CD8-positive, alpha-beta T cell (primary cell): ENCODE measurements at regions of chr12 and their contacts with region 1.

Region 1: GRCh38 chr12:31959161-31959700 is at the start of gene RESF1:
- DNase-seq: peak; percentile 70 to 95 (median 87)
- ATAC-seq: peak; percentile 73
- H3K4me3 ChIP-seq: peak within 1 kb of the TSS; percentile 75 to 76
- H3K4me3 Mint-ChIP-seq: peak within 1 kb of the TSS; percentile 96
- H3K27ac ChIP-seq: peak within 1 kb of the TSS; percentile 75 to 80
- H3K27ac Mint-ChIP-seq: peak within 1 kb of the TSS; percentile 97
- H3K4me1 ChIP-seq: peaks cover 47% of the 10 kb centered on the region
- H3K4me1 Mint-ChIP-seq: peaks cover 64% of the 10 kb centered on the region
- H3K27me3 ChIP-seq: no peaks in the 10 kb centered on the region
- H3K27me3 Mint-ChIP-seq: no peaks in the 10 kb centered on the region
- CTCF ChIP-seq: no peak
- total RNA-seq, gene RESF1: 117 to 119 TPM

Region 2: GRCh38 chr12:31650927-31651326 is 308.3 kb before region 1 on chr12:
- CTCF ChIA-PET with region 1: interaction called, 16 read pairs
- POLR2A ChIA-PET with region 1: interaction called, 15 read pairs
- intact Hi-C with region 1: loop called in 1 of 2 experiments (anchors 1 kb)
- DNase-seq: no peak
- ATAC-seq: no peak
- H3K4me3 ChIP-seq: no peak overlapping the region
- H3K4me3 Mint-ChIP-seq: no peak overlapping the region
- H3K27ac ChIP-seq: no peak overlapping the region
- H3K27ac Mint-ChIP-seq: no peak overlapping the region
- H3K4me1 ChIP-seq: peaks cover 6% of the 10 kb centered on the region
- H3K4me1 Mint-ChIP-seq: peaks cover 12% of the 10 kb centered on the region
- H3K27me3 ChIP-seq: no peaks in the 10 kb centered on the region
- H3K27me3 Mint-ChIP-seq: no peaks in the 10 kb centered on the region
- CTCF ChIP-seq: no peak

Region 3: GRCh38 chr12:31682136-31682962 is 276.9 kb before region 1 on chr12:
- CTCF ChIA-PET with region 1: interaction called, 4 read pairs
- POLR2A ChIA-PET with region 1: interaction called, 7 read pairs
- intact Hi-C with region 1: loop called in 1 of 2 experiments (anchors 1 kb)
- DNase-seq: peak; percentile 46 to 89 (median 66)
- ATAC-seq: peak; percentile 98
- H3K4me3 ChIP-seq: no peak overlapping the region
- H3K4me3 Mint-ChIP-seq: peak overlapping the region; percentile 13
- H3K27ac ChIP-seq: peak overlapping the region in 1 of 2 experiments; percentile 31
- H3K27ac Mint-ChIP-seq: peak overlapping the region; percentile 75
- H3K4me1 ChIP-seq: no peaks in the 10 kb centered on the region
- H3K4me1 Mint-ChIP-seq: peaks cover 9% of the 10 kb centered on the region
- H3K27me3 ChIP-seq: no peaks in the 10 kb centered on the region
- H3K27me3 Mint-ChIP-seq: no peaks in the 10 kb centered on the region
- CTCF ChIP-seq: peak; percentile 82

Region 4: DNA sequence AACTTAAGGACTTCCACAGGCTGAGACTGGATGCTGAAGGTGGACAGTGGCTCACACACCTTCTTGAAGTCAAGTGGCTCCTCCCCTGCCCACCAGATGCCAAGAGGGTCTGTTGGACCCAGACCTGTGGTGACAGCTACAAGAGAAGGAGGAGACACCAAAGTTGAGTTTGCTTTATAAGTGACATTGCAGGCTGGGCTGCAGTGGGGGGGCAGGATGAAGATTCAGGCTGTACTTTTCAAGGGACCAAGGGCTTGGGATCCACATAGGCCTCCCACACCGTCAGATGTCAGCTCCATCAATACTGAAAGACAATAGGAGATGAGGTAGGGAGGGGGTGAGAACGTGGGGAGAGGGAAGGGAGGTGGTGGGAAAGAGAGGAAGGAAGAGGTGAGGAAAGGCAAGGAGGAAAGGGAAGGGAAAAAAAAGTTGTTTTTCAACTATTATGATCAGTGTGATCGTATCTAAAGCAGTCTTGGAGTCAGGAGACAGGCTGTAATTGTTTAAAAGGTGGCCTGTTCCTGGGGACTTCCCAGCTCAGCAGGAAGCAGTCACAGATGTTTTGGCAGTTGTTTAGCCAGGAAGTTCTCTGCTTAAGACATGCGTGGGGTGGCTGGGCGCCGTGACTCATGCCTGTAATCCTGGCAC is 84.1 kb before region 1 on chr12:
- CTCF ChIA-PET with region 1: no interaction called
- POLR2A ChIA-PET with region 1: interaction called, 6 read pairs
- intact Hi-C with region 1: loop called (anchors 2 to 5 kb)
- DNase-seq: peak; percentile 47 to 94 (median 73)
- ATAC-seq: peak; percentile 93
- H3K4me3 ChIP-seq: peak overlapping the region in 1 of 2 experiments; percentile 6
- H3K4me3 Mint-ChIP-seq: peak overlapping the region; percentile 63
- H3K27ac ChIP-seq: peak overlapping the region; percentile 66 to 92
- H3K27ac Mint-ChIP-seq: peak overlapping the region; percentile 98
- H3K4me1 ChIP-seq: peaks cover 18% of the 10 kb centered on the region
- H3K4me1 Mint-ChIP-seq: peaks cover 55% of the 10 kb centered on the region
- H3K27me3 ChIP-seq: no peaks in the 10 kb centered on the region
- H3K27me3 Mint-ChIP-seq: no peaks in the 10 kb centered on the region
- CTCF ChIP-seq: no peak

Region 5: GRCh38 chr12:31896514-31897039 is 62.7 kb before region 1 on chr12:
- CTCF ChIA-PET with region 1: interaction called, 15 read pairs
- POLR2A ChIA-PET with region 1: interaction called, 56 read pairs
- intact Hi-C with region 1: loop called (anchors 1 to 2 kb)
- DNase-seq: peak; percentile 70 to 98 (median 85)
- ATAC-seq: peak; percentile 93
- H3K4me3 ChIP-seq: no peak overlapping the region
- H3K4me3 Mint-ChIP-seq: peak overlapping the region; percentile 56
- H3K27ac ChIP-seq: peak overlapping the region; percentile 64 to 79
- H3K27ac Mint-ChIP-seq: peak overlapping the region; percentile 96
- H3K4me1 ChIP-seq: peaks cover 70% of the 10 kb centered on the region
- H3K4me1 Mint-ChIP-seq: peaks cover 52% of the 10 kb centered on the region
- H3K27me3 ChIP-seq: no peaks in the 10 kb centered on the region
- H3K27me3 Mint-ChIP-seq: no peaks in the 10 kb centered on the region
- CTCF ChIP-seq: no peak

Region 6: DNA sequence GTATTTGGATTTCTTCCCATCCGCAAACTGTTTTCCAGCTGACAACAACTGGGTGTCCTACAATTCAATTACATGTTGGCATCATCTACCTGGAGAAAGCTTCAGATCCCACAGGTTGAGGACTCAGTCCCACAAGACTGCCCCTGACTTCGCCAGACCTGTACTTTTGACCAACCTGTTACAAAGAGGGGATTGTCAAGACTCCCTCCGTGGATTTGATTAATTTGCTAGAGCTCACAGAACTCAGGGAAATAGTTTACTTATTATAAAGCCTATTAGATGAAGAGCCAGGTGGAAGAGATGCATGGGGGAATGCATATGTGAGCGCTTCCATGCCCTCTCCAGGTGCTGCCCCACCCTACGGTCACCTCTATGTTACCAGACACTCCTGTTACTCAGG is 14.6 kb after region 1 on chr12:
- CTCF ChIA-PET with region 1: interaction called, 7 read pairs
- POLR2A ChIA-PET with region 1: interaction called, 10 read pairs
- intact Hi-C with region 1: no loop called
- DNase-seq: no peak
- ATAC-seq: no peak
- H3K4me3 ChIP-seq: no peak overlapping the region
- H3K4me3 Mint-ChIP-seq: no peak overlapping the region
- H3K27ac ChIP-seq: no peak overlapping the region
- H3K27ac Mint-ChIP-seq: peak overlapping the region; percentile 60
- H3K4me1 ChIP-seq: peaks cover 31% of the 10 kb centered on the region
- H3K4me1 Mint-ChIP-seq: peaks cover 55% of the 10 kb centered on the region
- H3K27me3 ChIP-seq: no peaks in the 10 kb centered on the region
- H3K27me3 Mint-ChIP-seq: no peaks in the 10 kb centered on the region
- CTCF ChIP-seq: no peak

Region 7: DNA sequence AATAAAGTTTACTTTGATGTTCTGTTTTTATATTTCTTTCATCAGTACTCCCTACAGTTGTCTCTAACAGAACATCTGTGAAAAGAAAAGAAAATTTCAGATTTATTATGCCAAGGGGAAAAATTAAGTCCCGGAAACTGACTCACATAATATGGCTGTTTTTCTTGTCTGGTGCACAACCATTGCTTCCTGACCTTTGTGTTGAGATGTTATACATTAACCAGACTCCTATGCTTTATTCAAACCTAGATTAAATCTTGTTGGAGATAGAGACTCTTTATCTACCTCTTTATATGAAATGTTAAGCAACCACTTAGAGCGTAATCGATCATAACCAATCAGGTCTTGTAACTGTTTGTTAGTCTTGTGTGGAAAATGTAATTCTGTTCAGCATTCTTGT is 109.8 kb after region 1 on chr12:
- CTCF ChIA-PET with region 1: no interaction called
- POLR2A ChIA-PET with region 1: no interaction called
- intact Hi-C with region 1: no loop called
- DNase-seq: no peak
- ATAC-seq: no peak
- H3K4me3 ChIP-seq: no peak overlapping the region
- H3K4me3 Mint-ChIP-seq: no peak overlapping the region
- H3K27ac ChIP-seq: no peak overlapping the region
- H3K27ac Mint-ChIP-seq: no peak overlapping the region
- H3K4me1 ChIP-seq: no peaks in the 10 kb centered on the region
- H3K4me1 Mint-ChIP-seq: no peaks in the 10 kb centered on the region
- H3K27me3 ChIP-seq: no peaks in the 10 kb centered on the region
- H3K27me3 Mint-ChIP-seq: no peaks in the 10 kb centered on the region
- CTCF ChIP-seq: no peak

Region 8: GRCh38 chr12:32302218-32303173 is 343.3 kb after region 1 on chr12:
- CTCF ChIA-PET with region 1: no interaction called
- POLR2A ChIA-PET with region 1: no interaction called
- intact Hi-C with region 1: loop called in 1 of 2 experiments (anchors 10 kb)
- DNase-seq: peak in 1 of 9 experiments; percentile 35
- ATAC-seq: no peak
- H3K4me3 ChIP-seq: no peak overlapping the region
- H3K4me3 Mint-ChIP-seq: no peak overlapping the region
- H3K27ac ChIP-seq: no peak overlapping the region
- H3K27ac Mint-ChIP-seq: no peak overlapping the region
- H3K4me1 ChIP-seq: no peaks in the 10 kb centered on the region
- H3K4me1 Mint-ChIP-seq: peaks cover 5% of the 10 kb centered on the region
- H3K27me3 ChIP-seq: no peaks in the 10 kb centered on the region
- H3K27me3 Mint-ChIP-seq: no peaks in the 10 kb centered on the region
- CTCF ChIP-seq: peak; percentile 21